Endothelial cell of umbilical vein (primary cell): ENCODE measurements at regions of chr10 and their contacts with region 1.

Region 1: GRCh38 chr10:29535012-29535777 is 99.6 kb downstream of the SVIL start:
- DNase-seq: peak; percentile 55
- H3K4me3 ChIP-seq: no peak overlapping the region
- H3K27ac ChIP-seq: peak overlapping the region; percentile 17
- H3K4me1 ChIP-seq: peaks cover 9% of the 10 kb centered on the region
- H3K27me3 ChIP-seq: no peaks in the 10 kb centered on the region
- CTCF ChIP-seq: peak; percentile 65 to 70
- POLR2A ChIP-seq: no peak

Region 2: DNA sequence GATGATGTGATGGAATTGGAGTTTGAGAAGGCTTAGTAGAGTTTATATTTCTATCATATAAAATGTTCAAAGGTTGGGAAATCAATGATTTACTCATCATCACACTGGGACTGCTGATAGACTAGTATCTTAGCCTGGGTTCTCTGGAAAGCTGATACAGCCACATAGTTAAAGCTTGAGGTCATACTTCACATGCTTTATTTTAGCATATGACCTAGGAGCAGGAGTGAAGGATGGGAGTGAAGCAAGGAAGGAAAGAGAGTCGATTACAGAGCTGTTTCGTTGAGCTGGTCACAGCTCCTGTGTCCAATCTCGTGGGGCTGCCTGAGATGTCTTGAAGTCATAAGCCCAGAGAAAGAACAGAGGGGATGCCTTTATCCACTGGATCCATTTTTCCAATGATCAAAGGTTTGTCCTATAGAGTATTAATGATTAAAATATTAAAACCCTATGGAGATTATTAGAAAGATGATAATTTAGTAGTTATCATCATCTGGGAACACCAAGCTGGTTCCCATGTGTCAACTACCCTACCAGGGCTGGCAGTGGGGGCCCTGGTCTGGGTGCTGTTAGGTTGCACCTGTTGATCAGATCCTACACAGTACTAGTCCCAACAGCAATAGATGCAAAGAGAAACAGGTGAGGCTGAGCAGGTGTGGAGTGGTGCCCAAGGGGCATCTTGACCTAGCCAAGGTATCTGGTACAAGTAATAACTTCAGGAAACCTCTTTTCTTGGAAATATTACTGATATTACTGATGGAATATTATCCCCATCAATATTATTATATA is 780.1 kb before region 1 on chr10:
- CTCF ChIA-PET with region 1: no interaction called
- POLR2A ChIA-PET with region 1: no interaction called
- dilution Hi-C with region 1: no loop called
- intact Hi-C with region 1: no loop called
- DNase-seq: no peak
- H3K4me3 ChIP-seq: no peak overlapping the region
- H3K27ac ChIP-seq: no peak overlapping the region
- H3K4me1 ChIP-seq: no peaks in the 10 kb centered on the region
- H3K27me3 ChIP-seq: no peaks in the 10 kb centered on the region
- CTCF ChIP-seq: no peak
- POLR2A ChIP-seq: no peak

Region 3: GRCh38 chr10:28822719-28823464 is 712.3 kb before region 1 on chr10:
- CTCF ChIA-PET with region 1: no interaction called
- POLR2A ChIA-PET with region 1: no interaction called
- dilution Hi-C with region 1: no loop called
- intact Hi-C with region 1: loop called (anchors 5 kb)
- DNase-seq: no peak
- H3K4me3 ChIP-seq: no peak overlapping the region
- H3K27ac ChIP-seq: no peak overlapping the region
- H3K4me1 ChIP-seq: no peaks in the 10 kb centered on the region
- H3K27me3 ChIP-seq: peaks cover 9 to 11% of the 10 kb centered on the region in 2 experiments
- CTCF ChIP-seq: no peak
- POLR2A ChIP-seq: no peak

Region 4: DNA sequence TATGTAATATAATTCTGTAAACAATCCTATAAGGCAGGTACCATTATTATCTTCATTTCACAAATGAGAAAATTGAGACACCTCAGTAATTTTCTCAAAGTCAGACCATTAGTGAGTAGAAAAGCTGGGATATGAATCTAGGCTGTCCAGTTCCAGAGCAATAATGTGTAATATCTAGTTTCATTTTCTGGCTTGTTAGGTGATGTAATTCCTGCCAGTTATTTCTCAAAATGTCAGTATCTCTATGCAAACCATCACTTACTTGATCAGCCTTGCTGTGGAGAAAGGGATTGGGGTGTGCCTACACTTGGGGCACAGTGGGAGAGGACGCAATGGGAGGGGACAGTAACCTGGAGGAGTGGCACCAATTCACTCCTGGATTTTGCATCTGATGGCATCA is 88.9 kb before region 1 on chr10:
- CTCF ChIA-PET with region 1: no interaction called
- POLR2A ChIA-PET with region 1: no interaction called
- dilution Hi-C with region 1: no loop called
- intact Hi-C with region 1: no loop called
- DNase-seq: no peak
- H3K4me3 ChIP-seq: no peak overlapping the region
- H3K27ac ChIP-seq: no peak overlapping the region
- H3K4me1 ChIP-seq: no peaks in the 10 kb centered on the region
- H3K27me3 ChIP-seq: no peaks in the 10 kb centered on the region
- CTCF ChIP-seq: no peak
- POLR2A ChIP-seq: no peak

Region 5: DNA sequence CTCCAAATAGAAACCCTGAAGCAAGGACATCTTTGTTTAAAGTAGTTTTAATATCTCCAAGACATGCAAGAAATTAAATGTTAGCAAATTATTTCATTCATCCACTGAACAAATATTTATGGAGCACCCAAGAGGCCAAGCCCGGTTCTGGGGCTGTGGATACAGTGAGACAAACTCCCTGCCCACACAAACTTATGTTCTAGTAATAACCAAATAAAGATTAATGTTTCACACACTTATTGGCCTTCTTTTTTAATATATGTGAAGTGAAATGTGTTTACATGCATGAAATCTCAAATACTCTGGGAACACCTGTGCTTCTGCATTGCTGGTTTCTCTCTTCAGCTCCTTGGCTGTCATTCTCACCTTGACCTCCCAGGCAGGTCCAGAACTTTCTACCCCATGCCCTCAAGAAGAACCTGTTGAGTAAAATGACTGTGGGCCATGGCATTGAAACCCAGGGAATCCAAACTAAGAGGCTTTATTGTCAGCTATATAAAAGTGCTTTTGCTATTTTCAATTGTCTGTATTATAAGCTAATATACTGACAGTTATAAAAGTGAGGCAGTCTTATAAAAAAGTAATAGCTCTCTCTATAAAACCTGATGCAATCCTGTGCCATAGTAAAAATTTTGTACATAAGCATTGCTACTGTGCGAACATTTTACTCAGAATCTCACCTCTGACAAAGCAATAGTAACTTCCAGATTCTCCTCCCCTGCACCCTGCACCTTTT is 55.9 kb after region 1 on chr10:
- CTCF ChIA-PET with region 1: interaction called, 14 read pairs
- POLR2A ChIA-PET with region 1: no interaction called
- dilution Hi-C with region 1: no loop called
- intact Hi-C with region 1: loop called (anchors 1 kb)
- DNase-seq: no peak
- H3K4me3 ChIP-seq: no peak overlapping the region
- H3K27ac ChIP-seq: no peak overlapping the region
- H3K4me1 ChIP-seq: peaks cover 23% of the 10 kb centered on the region
- H3K27me3 ChIP-seq: no peaks in the 10 kb centered on the region
- CTCF ChIP-seq: no peak
- POLR2A ChIP-seq: no peak

Region 6: GRCh38 chr10:29795850-29796249 is 260.7 kb after region 1 on chr10:
- CTCF ChIA-PET with region 1: no interaction called
- POLR2A ChIA-PET with region 1: no interaction called
- dilution Hi-C with region 1: no loop called
- intact Hi-C with region 1: no loop called
- DNase-seq: peak; percentile 60
- H3K4me3 ChIP-seq: no peak overlapping the region
- H3K27ac ChIP-seq: peak overlapping the region; percentile 25
- H3K4me1 ChIP-seq: peaks cover 35% of the 10 kb centered on the region
- H3K27me3 ChIP-seq: no peaks in the 10 kb centered on the region
- CTCF ChIP-seq: no peak
- POLR2A ChIP-seq: no peak